B cell (primary cell): ENCODE measurements at regions of chr11 and their contacts with region 1.

Region 1: GRCh38 chr11:288328-289144 is at the start of gene PGGHG:
- DNase-seq: peak; percentile 64
- ATAC-seq: peak; percentile 91
- H3K4me3 ChIP-seq: peak within 1 kb of the TSS; percentile 62 to 78 (median 72)
- H3K4me3 Mint-ChIP-seq: peak within 1 kb of the TSS; percentile 89
- H3K27ac ChIP-seq: peak within 1 kb of the TSS in 1 of 2 donors; percentile 55
- H3K27ac Mint-ChIP-seq: peak within 1 kb of the TSS; percentile 83
- H3K4me1 ChIP-seq: peaks cover 18 to 25% of the 10 kb centered on the region in 2 donors
- H3K4me1 Mint-ChIP-seq: peaks cover 20% of the 10 kb centered on the region
- H3K27me3 ChIP-seq: peaks cover 0 to 25% (median 6%) of the 10 kb centered on the region in 4 experiments
- H3K27me3 Mint-ChIP-seq: peaks cover 13% of the 10 kb centered on the region
- CTCF ChIP-seq: no peak
- total RNA-seq, gene PGGHG: 159 and 169 TPM in 2 replicates

Region 2: GRCh38 chr11:236774-237767 is 51.5 kb before region 1 on chr11 and contains the start of gene PSMD13:
- CTCF ChIA-PET with region 1: no interaction called
- POLR2A ChIA-PET with region 1: no interaction called
- intact Hi-C with region 1: loop called (anchors 5 kb)
- DNase-seq: peak; percentile 91
- ATAC-seq: peak; percentile 77
- H3K4me3 ChIP-seq: peak within 1 kb of the TSS; percentile 89 to 98 (median 95)
- H3K4me3 Mint-ChIP-seq: peak within 1 kb of the TSS; percentile 99
- H3K27ac ChIP-seq: peak within 1 kb of the TSS; percentile 94 to 99
- H3K27ac Mint-ChIP-seq: peak within 1 kb of the TSS; percentile 100
- H3K4me1 ChIP-seq: peaks cover 18 to 22% of the 10 kb centered on the region in 2 donors
- H3K4me1 Mint-ChIP-seq: peaks cover 38% of the 10 kb centered on the region
- H3K27me3 ChIP-seq: no peaks in the 10 kb centered on the region
- H3K27me3 Mint-ChIP-seq: no peaks in the 10 kb centered on the region
- CTCF ChIP-seq: no peak
- total RNA-seq, gene PSMD13: 96.2 and 104 TPM in 2 replicates

Region 3: GRCh38 chr11:587978-588380 is 299.4 kb after region 1 on chr11:
- CTCF ChIA-PET with region 1: no interaction called
- POLR2A ChIA-PET with region 1: no interaction called
- intact Hi-C with region 1: no loop called
- DNase-seq: no peak
- ATAC-seq: peak; percentile 31
- H3K4me3 ChIP-seq: no peak overlapping the region
- H3K4me3 Mint-ChIP-seq: no peak overlapping the region
- H3K27ac ChIP-seq: no peak overlapping the region
- H3K27ac Mint-ChIP-seq: no peak overlapping the region
- H3K4me1 ChIP-seq: peaks cover 0 to 3% of the 10 kb centered on the region in 2 donors
- H3K4me1 Mint-ChIP-seq: no peaks in the 10 kb centered on the region
- H3K27me3 ChIP-seq: no peaks in the 10 kb centered on the region
- H3K27me3 Mint-ChIP-seq: no peaks in the 10 kb centered on the region
- CTCF ChIP-seq: no peak